ENCODE measurements at regions of chr4 and their contacts with region 1.

Region 1: GRCh38 chr4:1289207-1290164 is at the start of gene MAEA:
- DNase-seq: peak; percentile 91 to 97 (median 96)
- ATAC-seq: peak; percentile 98
- H3K4me3 ChIP-seq: peak within 1 kb of the TSS; percentile 96
- H3K4me3 Mint-ChIP-seq: peak within 1 kb of the TSS; percentile 91 to 99 (median 93)
- H3K27ac ChIP-seq: peak within 1 kb of the TSS; percentile 93
- H3K27ac Mint-ChIP-seq: peak within 1 kb of the TSS; percentile 88 to 94 (median 90)
- H3K4me1 ChIP-seq: peaks cover 22 to 34% of the 10 kb centered on the region in 2 donors
- H3K4me1 Mint-ChIP-seq: peaks cover 23 to 49% (median 37%) of the 10 kb centered on the region in 7 donors
- H3K27me3 ChIP-seq: no peaks in the 10 kb centered on the region
- H3K27me3 Mint-ChIP-seq: no peaks in the 10 kb centered on the region
- total RNA-seq, gene MAEA: 56.2 to 92.2 (median 79.4) TPM

Region 2: GRCh38 chr4:973431-974397 is 315.8 kb before region 1 on chr4 and contains the start of gene DGKQ:
- CTCF ChIA-PET with region 1: no interaction called
- POLR2A ChIA-PET with region 1: no interaction called
- intact Hi-C with region 1: loop called in 1 of 2 experiments (anchors 1 kb)
- DNase-seq: peak; percentile 68 to 93 (median 83)
- ATAC-seq: peak; percentile 96
- H3K4me3 ChIP-seq: peak within 1 kb of the TSS; percentile 56
- H3K4me3 Mint-ChIP-seq: peak within 1 kb of the TSS; percentile 19 to 75 (median 56)
- H3K27ac ChIP-seq: peak within 1 kb of the TSS; percentile 72
- H3K27ac Mint-ChIP-seq: no peak within 1 kb of the TSS
- H3K4me1 ChIP-seq: peaks cover 13 to 26% of the 10 kb centered on the region in 2 donors
- H3K4me1 Mint-ChIP-seq: peaks cover 0 to 17% (median 10%) of the 10 kb centered on the region in 7 donors
- H3K27me3 ChIP-seq: no peaks in the 10 kb centered on the region
- H3K27me3 Mint-ChIP-seq: no peaks in the 10 kb centered on the region
- total RNA-seq, gene DGKQ: 14.9 to 28.0 (median 22.7) TPM

Region 3: GRCh38 chr4:1167247-1167949 is 122.1 kb before region 1 on chr4:
- CTCF ChIA-PET with region 1: no interaction called
- POLR2A ChIA-PET with region 1: no interaction called
- intact Hi-C with region 1: loop called (anchors 1 kb)
- DNase-seq: peak; percentile 74 to 89 (median 82)
- ATAC-seq: peak; percentile 92
- H3K4me3 ChIP-seq: peak overlapping the region; percentile 90
- H3K4me3 Mint-ChIP-seq: peak overlapping the region; percentile 82 to 90 (median 87)
- H3K27ac ChIP-seq: peak overlapping the region; percentile 74
- H3K27ac Mint-ChIP-seq: peak overlapping the region in 8 of 9 donors; percentile 51 to 86 (median 70)
- H3K4me1 ChIP-seq: peaks cover 3 to 17% of the 10 kb centered on the region in 2 donors
- H3K4me1 Mint-ChIP-seq: peaks cover 8 to 26% (median 18%) of the 10 kb centered on the region in 7 donors
- H3K27me3 ChIP-seq: peaks cover 0 to 9% of the 10 kb centered on the region in 2 donors
- H3K27me3 Mint-ChIP-seq: peaks cover 0 to 21% (median 6%) of the 10 kb centered on the region in 5 donors

Region 4: DNA sequence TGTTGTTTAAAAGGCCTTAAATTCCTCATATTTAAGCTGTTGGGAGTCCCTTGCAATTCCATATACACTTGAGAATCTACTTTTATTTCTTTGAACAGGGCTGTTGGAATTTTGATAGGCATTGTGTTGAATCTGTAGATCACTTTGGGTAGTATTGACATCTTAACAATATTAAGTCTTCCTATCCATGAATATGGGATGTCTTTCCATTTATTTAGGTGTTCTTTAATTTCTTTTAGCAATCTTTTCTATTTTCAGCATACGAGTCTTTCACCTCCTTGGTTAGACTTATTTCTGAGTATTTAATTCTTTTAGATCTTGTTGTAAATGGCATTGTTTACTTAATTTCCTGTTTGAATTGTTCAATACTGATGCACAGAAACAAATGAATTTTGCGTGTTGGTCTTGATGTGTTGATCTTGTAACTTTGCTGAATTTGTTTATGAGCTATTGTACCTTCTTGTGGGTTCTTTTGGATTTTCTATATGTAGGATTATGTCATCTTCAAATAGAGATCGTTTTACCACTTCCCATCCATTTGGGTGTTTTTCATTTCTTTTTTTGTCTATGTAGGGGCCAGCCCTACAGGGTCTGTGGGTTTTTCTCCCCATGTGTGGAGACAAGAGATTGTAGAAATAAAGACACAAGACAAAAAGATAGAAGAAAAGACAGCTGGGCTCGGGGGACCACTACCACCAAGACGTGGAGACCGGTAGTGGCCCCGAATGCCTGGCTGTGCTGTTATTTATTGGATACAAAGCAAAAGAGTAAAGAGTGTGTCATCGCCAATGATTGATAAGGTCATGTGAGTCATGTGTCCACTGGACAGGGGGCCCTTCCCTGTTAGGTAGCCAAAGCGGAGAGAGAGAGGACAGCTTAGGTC is 22.4 kb before region 1 on chr4:
- CTCF ChIA-PET with region 1: interaction called, 3 read pairs
- POLR2A ChIA-PET with region 1: interaction called, 3 read pairs
- intact Hi-C with region 1: loop called (anchors 1 kb)
- DNase-seq: peak in 5 of 9 donors; percentile 36 to 59 (median 48)
- ATAC-seq: peak; percentile 73
- H3K4me3 ChIP-seq: peak overlapping the region; percentile 53
- H3K4me3 Mint-ChIP-seq: peak overlapping the region; percentile 49 to 87 (median 72)
- H3K27ac ChIP-seq: peak overlapping the region; percentile 45
- H3K27ac Mint-ChIP-seq: peak overlapping the region; percentile 40 to 96 (median 82)
- H3K4me1 ChIP-seq: peaks cover 0 to 7% of the 10 kb centered on the region in 2 donors
- H3K4me1 Mint-ChIP-seq: peaks cover 8 to 22% (median 15%) of the 10 kb centered on the region in 7 donors
- H3K27me3 ChIP-seq: no peaks in the 10 kb centered on the region
- H3K27me3 Mint-ChIP-seq: no peaks in the 10 kb centered on the region

Region 5: DNA sequence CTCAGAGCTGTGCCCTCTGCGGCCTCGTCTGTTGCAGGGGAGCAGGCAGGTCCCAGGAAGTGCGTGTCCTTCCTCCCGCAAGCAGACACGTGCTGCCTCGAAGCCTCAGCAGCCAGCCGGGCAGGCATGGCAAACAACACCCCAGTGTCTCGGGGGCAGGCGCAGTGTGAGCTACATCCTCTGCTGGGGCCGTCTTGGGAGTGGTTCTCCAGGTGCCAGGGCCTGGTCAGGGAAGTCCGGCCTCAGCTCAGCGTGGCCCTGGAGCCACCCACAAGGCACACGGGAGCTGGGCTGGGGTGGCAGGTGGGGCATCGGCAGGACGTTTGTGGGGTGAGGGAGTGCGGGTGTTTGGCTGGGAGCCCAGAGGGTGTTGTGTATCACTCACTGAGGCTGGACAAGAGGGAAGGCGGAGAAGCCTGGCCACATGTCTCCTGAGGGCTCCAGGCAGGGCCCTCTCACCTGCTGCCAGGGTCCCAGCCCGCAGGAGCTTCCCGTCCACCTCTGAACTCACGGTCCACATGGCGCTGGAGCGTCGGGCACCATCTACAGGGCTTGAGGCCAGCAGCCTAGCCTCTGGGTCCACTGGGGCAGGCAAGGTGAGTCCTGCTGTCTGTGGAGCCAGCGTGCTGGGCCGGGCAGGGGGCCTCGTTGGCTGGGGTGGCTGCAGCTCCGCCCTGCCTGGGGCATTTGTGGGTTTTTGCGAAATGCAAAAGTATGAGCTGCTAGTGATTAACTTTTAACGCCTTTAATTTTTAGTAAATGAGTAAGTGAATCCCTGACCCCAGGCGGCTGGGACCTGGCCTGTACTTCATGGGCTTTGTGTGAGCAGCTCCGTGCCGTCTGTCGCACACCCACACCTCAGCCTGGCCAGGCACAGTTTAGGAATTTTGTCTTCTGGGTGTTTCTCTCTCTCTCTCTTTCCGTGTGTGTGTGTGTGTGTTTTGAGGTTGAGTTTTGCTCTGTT is 40.2 kb after region 1 on chr4:
- CTCF ChIA-PET with region 1: interaction called, 3 read pairs
- POLR2A ChIA-PET with region 1: interaction called, 4 read pairs
- intact Hi-C with region 1: loop called in 1 of 2 experiments (anchors 1 kb)
- DNase-seq: peak in 7 of 9 donors; percentile 30 to 52 (median 45)
- ATAC-seq: peak; percentile 31
- H3K4me3 ChIP-seq: no peak overlapping the region
- H3K4me3 Mint-ChIP-seq: peak overlapping the region in 7 of 10 donors; percentile 72 to 80 (median 77)
- H3K27ac ChIP-seq: peak overlapping the region; percentile 38
- H3K27ac Mint-ChIP-seq: peak overlapping the region; percentile 74 to 96 (median 92)
- H3K4me1 ChIP-seq: peaks cover 32 to 39% of the 10 kb centered on the region in 2 donors
- H3K4me1 Mint-ChIP-seq: peaks cover 22 to 32% (median 31%) of the 10 kb centered on the region in 7 donors
- H3K27me3 ChIP-seq: no peaks in the 10 kb centered on the region
- H3K27me3 Mint-ChIP-seq: no peaks in the 10 kb centered on the region

Region 6: GRCh38 chr4:1683736-1684505 is 394.4 kb after region 1 on chr4 and contains the start of gene FAM53A:
- CTCF ChIA-PET with region 1: no interaction called
- POLR2A ChIA-PET with region 1: no interaction called
- intact Hi-C with region 1: loop called in 1 of 2 experiments (anchors 1 kb)
- DNase-seq: peak in 5 of 9 donors; percentile 23 to 99 (median 88)
- ATAC-seq: peak; percentile 98
- H3K4me3 ChIP-seq: peak within 1 kb of the TSS; percentile 51
- H3K4me3 Mint-ChIP-seq: peak within 1 kb of the TSS; percentile 86 to 97 (median 93)
- H3K27ac ChIP-seq: peak within 1 kb of the TSS; percentile 62
- H3K27ac Mint-ChIP-seq: peak within 1 kb of the TSS; percentile 86 to 98 (median 91)
- H3K4me1 ChIP-seq: peaks cover 0 to 4% of the 10 kb centered on the region in 2 donors
- H3K4me1 Mint-ChIP-seq: peaks cover 9 to 15% (median 12%) of the 10 kb centered on the region in 7 donors
- H3K27me3 ChIP-seq: no peaks in the 10 kb centered on the region
- H3K27me3 Mint-ChIP-seq: peaks cover 0 to 9% (median 0%) of the 10 kb centered on the region in 5 donors
- total RNA-seq, gene FAM53A: 1.2 to 3.6 (median 1.4) TPM

Measured in naive thymus-derived CD4-positive, alpha-beta T cell (primary cell).